ENCODE measurements at regions of chr2 and their contacts with region 1.

Region 1: GRCh38 chr2:64839844-64840243 is 149.4 kb upstream of the SLC1A4 start:
- DNase-seq: peak; percentile 44 to 69 (median 50)
- H3K4me3 ChIP-seq: no peak overlapping the region
- H3K4me3 Mint-ChIP-seq: no peak overlapping the region
- H3K27ac ChIP-seq: peak overlapping the region; percentile 69 to 71
- H3K27ac Mint-ChIP-seq: peak overlapping the region; percentile 58 to 96 (median 84)
- H3K4me1 ChIP-seq: peaks cover 62 to 72% of the 10 kb centered on the region in 2 donors
- H3K4me1 Mint-ChIP-seq: peaks cover 68% of the 10 kb centered on the region
- H3K27me3 ChIP-seq: no peaks in the 10 kb centered on the region
- H3K27me3 Mint-ChIP-seq: peaks cover 0 to 1% (median 0%) of the 10 kb centered on the region in 3 donors
- CTCF ChIP-seq: no peak

Region 2: GRCh38 chr2:64852771-64853705 is 13.2 kb after region 1 on chr2:
- intact Hi-C with region 1: loop called in 1 of 2 experiments (anchors 2 kb)
- DNase-seq: peak; percentile 87 to 91 (median 91)
- H3K4me3 ChIP-seq: peak overlapping the region in 1 of 3 experiments; percentile 44
- H3K4me3 Mint-ChIP-seq: peak overlapping the region; percentile 20 to 73
- H3K27ac ChIP-seq: peak overlapping the region; percentile 95
- H3K27ac Mint-ChIP-seq: peak overlapping the region; percentile 96 to 99 (median 98)
- H3K4me1 ChIP-seq: peaks cover 91 to 92% of the 10 kb centered on the region in 2 donors
- H3K4me1 Mint-ChIP-seq: peaks cover 82% of the 10 kb centered on the region
- H3K27me3 ChIP-seq: no peaks in the 10 kb centered on the region
- H3K27me3 Mint-ChIP-seq: peaks cover 0 to 4% (median 0%) of the 10 kb centered on the region in 3 donors
- CTCF ChIP-seq: no peak

Region 3: DNA sequence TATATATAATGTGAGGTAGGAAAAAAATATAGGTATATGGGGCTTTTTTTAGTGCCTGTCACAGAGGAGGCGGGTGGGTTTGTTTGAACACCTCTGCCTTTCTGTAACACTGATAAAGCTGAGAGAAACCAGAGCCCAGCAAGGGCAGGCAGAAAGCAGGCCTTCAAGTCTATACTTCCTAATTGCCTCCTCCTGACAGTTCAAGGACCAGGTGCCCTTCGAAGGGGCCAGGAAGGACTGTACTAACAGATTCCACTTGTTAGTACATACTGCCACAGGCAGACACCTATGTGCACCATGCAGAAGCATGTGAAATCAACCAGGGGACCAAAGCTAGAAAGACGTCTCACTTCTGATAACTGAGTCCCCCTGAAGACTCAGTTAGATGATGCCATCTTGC is 163.2 kb after region 1 on chr2:
- intact Hi-C with region 1: no loop called
- DNase-seq: no peak
- H3K4me3 ChIP-seq: no peak overlapping the region
- H3K4me3 Mint-ChIP-seq: no peak overlapping the region
- H3K27ac ChIP-seq: no peak overlapping the region
- H3K27ac Mint-ChIP-seq: peak overlapping the region in 1 of 7 donors; percentile 41
- H3K4me1 ChIP-seq: no peaks in the 10 kb centered on the region
- H3K4me1 Mint-ChIP-seq: peaks cover 7% of the 10 kb centered on the region
- H3K27me3 ChIP-seq: no peaks in the 10 kb centered on the region
- H3K27me3 Mint-ChIP-seq: no peaks in the 10 kb centered on the region
- CTCF ChIP-seq: no peak

Measured in CD14-positive monocyte (primary cell).